Activated naive CD4-positive, alpha-beta T cell treated with anti-CD3 and anti-CD28 coated beads for 36 hours (primary cell): ENCODE measurements at regions of chr6 and their contacts with region 1.

Region 1: DNA sequence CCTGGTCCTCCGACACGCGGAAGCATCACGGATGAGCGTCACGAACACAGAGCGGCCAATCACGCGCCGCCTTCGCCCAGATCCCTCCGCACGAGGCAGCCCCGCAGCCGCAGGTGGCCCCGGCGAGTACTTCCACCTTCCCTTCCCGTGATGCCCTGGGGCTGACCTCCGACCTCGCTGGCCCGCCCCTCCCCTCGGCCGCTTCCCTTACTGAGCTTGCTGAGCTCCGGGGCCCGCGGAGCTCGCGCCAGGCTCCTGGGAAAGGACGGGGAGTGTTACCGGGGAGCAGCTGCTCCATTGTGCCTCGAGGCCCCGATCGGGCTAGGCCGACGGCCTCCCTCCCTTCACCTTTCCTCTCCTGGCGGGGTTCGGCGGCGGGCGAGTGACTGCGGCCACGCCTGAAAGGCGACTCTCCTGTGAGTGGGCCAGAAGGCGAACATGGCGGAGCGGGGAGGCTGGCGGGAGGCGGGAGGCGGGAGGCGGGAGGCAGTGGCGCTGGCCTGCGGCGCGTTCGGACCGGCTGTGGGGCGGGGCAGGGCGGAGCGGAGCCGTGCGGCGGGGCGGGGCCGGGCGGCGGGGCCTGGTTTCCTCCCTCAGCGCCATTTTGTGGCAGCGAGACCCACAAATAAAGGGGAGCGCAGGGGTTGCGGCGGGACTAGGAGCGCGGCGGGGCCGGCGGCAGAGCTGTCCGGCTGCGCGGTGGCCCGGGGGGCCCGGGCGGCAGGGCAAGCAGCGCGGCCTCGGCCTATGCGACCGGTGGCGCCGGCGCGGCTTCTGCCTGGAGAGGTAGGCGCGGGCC is at the start of gene WTAP:
- DNase-seq: peak; percentile 98
- H3K4me3 Mint-ChIP-seq: peak within 1 kb of the TSS; percentile 91
- H3K27ac Mint-ChIP-seq: peak within 1 kb of the TSS; percentile 95
- H3K4me1 Mint-ChIP-seq: peaks cover 50% of the 10 kb centered on the region
- H3K27me3 Mint-ChIP-seq: no peaks in the 10 kb centered on the region
- total RNA-seq, gene WTAP: 87.5 to 91.6 TPM

Region 2: GRCh38 chr6:159679091-159680077 is 47.7 kb before region 1 on chr6:
- CTCF ChIA-PET with region 1: no interaction called
- intact Hi-C with region 1: loop called (anchors 1 kb)
- DNase-seq: peak; percentile 69
- H3K4me3 Mint-ChIP-seq: peak overlapping the region; percentile 11
- H3K27ac Mint-ChIP-seq: peak overlapping the region; percentile 88
- H3K4me1 Mint-ChIP-seq: peaks cover 39% of the 10 kb centered on the region
- H3K27me3 Mint-ChIP-seq: no peaks in the 10 kb centered on the region

Region 3: DNA sequence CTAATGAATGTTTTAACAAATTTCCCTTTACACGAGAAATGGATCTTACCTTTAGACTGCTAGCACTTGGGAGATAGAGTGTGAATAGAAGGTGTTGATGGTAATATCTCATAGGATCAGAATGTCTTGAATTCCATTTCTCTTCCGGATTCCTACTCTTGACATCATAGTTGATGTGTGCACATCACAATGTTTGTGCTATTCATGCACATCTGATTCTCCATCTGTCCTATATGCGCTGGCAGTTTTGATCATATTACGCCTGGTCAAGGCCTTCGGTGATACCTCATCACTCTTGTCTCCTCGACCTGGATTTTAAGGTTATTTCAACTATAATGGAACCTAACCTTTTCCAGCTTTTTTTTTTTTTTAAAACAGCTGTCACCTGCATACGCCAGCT is 18.0 kb after region 1 on chr6:
- CTCF ChIA-PET with region 1: interaction called, 6 read pairs
- intact Hi-C with region 1: loop called (anchors 2 kb)
- DNase-seq: no peak
- H3K4me3 Mint-ChIP-seq: no peak overlapping the region
- H3K27ac Mint-ChIP-seq: peak overlapping the region; percentile 14
- H3K4me1 Mint-ChIP-seq: peaks cover 34% of the 10 kb centered on the region
- H3K27me3 Mint-ChIP-seq: no peaks in the 10 kb centered on the region

Region 4: DNA sequence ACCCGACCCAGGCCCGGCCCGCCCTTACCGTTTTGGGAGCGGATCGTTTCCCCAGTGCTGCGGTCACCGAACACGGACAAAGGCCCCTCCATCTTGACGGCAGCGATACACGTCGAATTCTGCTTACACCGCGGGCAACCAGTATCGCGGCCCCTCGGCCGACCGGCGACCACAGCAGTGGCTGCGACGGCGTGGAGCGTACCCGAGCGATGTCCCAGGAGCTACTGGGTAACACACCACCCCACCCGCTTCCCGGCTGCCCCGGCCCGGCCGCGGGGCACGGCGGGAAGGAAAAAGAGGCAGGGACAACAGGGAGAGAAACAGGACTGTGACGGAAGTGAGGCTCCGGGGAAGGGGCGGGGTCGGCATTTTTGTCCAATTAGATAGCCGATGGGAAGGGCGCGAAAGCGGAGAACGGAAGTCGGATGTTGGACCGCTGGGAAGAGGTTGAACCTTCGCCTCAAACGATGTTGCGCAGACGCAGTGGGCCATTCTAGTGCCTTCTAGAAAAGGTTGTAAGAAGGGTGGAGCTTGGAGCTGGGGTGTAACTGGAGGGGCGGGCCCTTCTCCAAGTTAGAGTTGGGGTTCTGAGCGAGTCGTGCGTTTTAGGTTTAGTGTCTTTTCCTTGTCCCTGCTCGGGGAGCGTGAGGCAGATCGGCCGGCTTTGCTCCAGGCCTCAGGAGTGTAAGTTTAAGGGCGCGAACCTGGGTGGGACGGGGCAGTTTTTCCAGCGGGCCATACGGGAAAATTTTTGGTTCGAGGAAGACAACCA is 62.4 kb after region 1 on chr6 and contains the start of gene TCP1:
- CTCF ChIA-PET with region 1: interaction called, 9 read pairs
- intact Hi-C with region 1: loop called (anchors 1 kb)
- DNase-seq: peak; percentile 100
- H3K4me3 Mint-ChIP-seq: peak within 1 kb of the TSS; percentile 99
- H3K27ac Mint-ChIP-seq: peak within 1 kb of the TSS; percentile 98
- H3K4me1 Mint-ChIP-seq: peaks cover 66% of the 10 kb centered on the region
- H3K27me3 Mint-ChIP-seq: no peaks in the 10 kb centered on the region
- total RNA-seq, gene TCP1: 420 to 425 TPM

Region 5: GRCh38 chr6:159979136-159979874 is 252.2 kb after region 1 on chr6:
- CTCF ChIA-PET with region 1: no interaction called
- intact Hi-C with region 1: loop called (anchors 2 kb)
- DNase-seq: peak; percentile 87
- H3K4me3 Mint-ChIP-seq: peak overlapping the region; percentile 65
- H3K27ac Mint-ChIP-seq: peak overlapping the region; percentile 98
- H3K4me1 Mint-ChIP-seq: peaks cover 92% of the 10 kb centered on the region
- H3K27me3 Mint-ChIP-seq: no peaks in the 10 kb centered on the region